ENCODE measurements at regions of chr17 and their contacts with region 1.

Region 1: DNA sequence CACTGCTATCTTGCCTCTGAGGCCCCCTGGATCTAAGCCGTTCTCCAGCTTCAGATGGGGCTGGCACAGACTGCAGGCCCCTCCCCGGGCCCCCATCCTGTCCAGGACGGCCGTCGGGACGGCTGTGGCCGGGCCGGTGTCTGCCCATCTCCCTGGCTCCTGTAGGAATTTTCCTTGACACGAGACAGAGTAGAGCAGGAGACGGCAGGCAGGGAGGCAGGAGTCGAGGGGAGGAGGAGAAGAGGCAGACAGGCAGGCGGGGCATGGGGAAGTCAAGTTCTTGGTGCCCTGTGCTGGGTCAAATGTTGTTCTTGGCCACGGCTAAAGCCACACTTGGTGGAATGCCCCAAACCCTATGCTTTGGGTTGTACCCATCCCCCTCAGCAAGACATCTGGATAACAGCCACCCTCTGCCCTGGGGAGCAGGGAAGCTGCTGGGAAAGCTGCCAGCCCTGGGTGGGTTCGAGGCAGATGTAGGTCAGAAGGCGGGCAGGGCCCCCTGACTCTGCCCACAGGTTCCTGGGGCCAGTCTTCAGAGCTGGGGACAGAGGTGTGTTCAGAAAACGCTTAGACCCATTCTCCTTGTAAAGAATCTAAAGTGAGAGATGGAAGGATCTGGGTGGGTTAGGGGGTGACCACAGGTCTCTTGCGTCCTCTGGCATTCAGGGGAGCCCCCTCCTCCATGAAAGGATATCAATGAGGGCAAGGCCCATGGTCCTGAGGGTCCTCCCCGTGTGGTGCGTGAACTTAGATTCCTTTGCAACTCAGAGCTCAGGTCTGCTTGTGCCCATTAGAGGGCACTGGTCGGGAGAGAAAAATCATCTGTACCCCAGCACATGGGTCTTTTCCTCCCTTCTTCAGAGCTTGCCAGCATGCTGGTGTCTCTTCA is 4.2 kb downstream of the C1QTNF1 start:
- DNase-seq: no peak
- H3K4me3 ChIP-seq: no peak overlapping the region
- H3K27ac ChIP-seq: peak overlapping the region; percentile 46
- H3K4me1 ChIP-seq: peaks cover 47% of the 10 kb centered on the region
- H3K27me3 ChIP-seq: no peaks in the 10 kb centered on the region
- CTCF ChIP-seq: peak in 1 of 2 donors; percentile 32

Region 2: GRCh38 chr17:79038545-79039135 is 10.5 kb after region 1 on chr17:
- CTCF ChIA-PET with region 1: interaction called, 39 read pairs
- dilution Hi-C with region 1: no loop called
- in situ Hi-C with region 1: no loop called
- intact Hi-C with region 1: loop called (anchors 1 kb)
- DNase-seq: peak; percentile 99
- H3K4me3 ChIP-seq: no peak overlapping the region
- H3K27ac ChIP-seq: peak overlapping the region; percentile 93
- H3K4me1 ChIP-seq: peaks cover 45% of the 10 kb centered on the region
- H3K27me3 ChIP-seq: no peaks in the 10 kb centered on the region
- CTCF ChIP-seq: no peak

Measured in mammary epithelial cell (primary cell).